Activated B cell treated with CpG ODN at 0.5 μM for 24 hours (primary cell): ENCODE measurements at regions of chr12 and their contacts with region 1.

Region 1: GRCh38 chr12:49515266-49515665 is 23.6 kb upstream of the KCNH3 start:
- DNase-seq: no peak
- ATAC-seq: no peak
- H3K4me3 Mint-ChIP-seq: no peak overlapping the region
- H3K27ac Mint-ChIP-seq: no peak overlapping the region
- H3K4me1 Mint-ChIP-seq: no peaks in the 10 kb centered on the region
- H3K27me3 Mint-ChIP-seq: no peaks in the 10 kb centered on the region
- CTCF ChIP-seq: no peak

Region 2: GRCh38 chr12:49331380-49332222 is 183.7 kb before region 1 on chr12:
- CTCF ChIA-PET with region 1: interaction called, 33 read pairs
- POLR2A ChIA-PET with region 1: interaction called, 6 read pairs
- intact Hi-C with region 1: no loop called
- DNase-seq: no peak
- ATAC-seq: no peak
- H3K4me3 Mint-ChIP-seq: no peak overlapping the region
- H3K27ac Mint-ChIP-seq: no peak overlapping the region
- H3K4me1 Mint-ChIP-seq: peaks cover 16% of the 10 kb centered on the region
- H3K27me3 Mint-ChIP-seq: peaks cover 33% of the 10 kb centered on the region
- CTCF ChIP-seq: no peak

Region 3: GRCh38 chr12:49503674-49504180 is 11.5 kb before region 1 on chr12:
- CTCF ChIA-PET with region 1: interaction called, 8 read pairs
- POLR2A ChIA-PET with region 1: interaction called, 12 read pairs
- intact Hi-C with region 1: no loop called
- DNase-seq: no peak
- ATAC-seq: no peak
- H3K4me3 Mint-ChIP-seq: no peak overlapping the region
- H3K27ac Mint-ChIP-seq: no peak overlapping the region
- H3K4me1 Mint-ChIP-seq: peaks cover 5% of the 10 kb centered on the region
- H3K27me3 Mint-ChIP-seq: no peaks in the 10 kb centered on the region
- CTCF ChIP-seq: no peak

Region 4: GRCh38 chr12:49777800-49778748 is 262.8 kb after region 1 on chr12:
- CTCF ChIA-PET with region 1: no interaction called
- POLR2A ChIA-PET with region 1: no interaction called
- intact Hi-C with region 1: no loop called
- DNase-seq: peak; percentile 63
- ATAC-seq: peak; percentile 84
- H3K4me3 Mint-ChIP-seq: no peak overlapping the region
- H3K27ac Mint-ChIP-seq: no peak overlapping the region
- H3K4me1 Mint-ChIP-seq: peaks cover 13% of the 10 kb centered on the region
- H3K27me3 Mint-ChIP-seq: peaks cover 18% of the 10 kb centered on the region
- CTCF ChIP-seq: peak; percentile 82